ENCODE measurements at regions of chrX and their contacts with region 1.

Region 1: GRCh38 chrX:41084044-41084892 is 977 bp upstream of the USP9X start:
- DNase-seq: peak; percentile 95 to 100 (median 99)
- H3K4me3 ChIP-seq: peak overlapping the region; percentile 81 to 91
- H3K4me3 Mint-ChIP-seq: peak overlapping the region; percentile 88 to 99 (median 97)
- H3K27ac ChIP-seq: peak overlapping the region; percentile 95
- H3K27ac Mint-ChIP-seq: peak overlapping the region; percentile 97 to 100 (median 100)
- H3K4me1 ChIP-seq: peaks cover 19% of the 10 kb centered on the region
- H3K4me1 Mint-ChIP-seq: peaks cover 10 to 37% (median 31%) of the 10 kb centered on the region in 4 donors
- H3K27me3 ChIP-seq: no peaks in the 10 kb centered on the region
- H3K27me3 Mint-ChIP-seq: peaks cover 0 to 1% of the 10 kb centered on the region in 2 donors

Region 2: DNA sequence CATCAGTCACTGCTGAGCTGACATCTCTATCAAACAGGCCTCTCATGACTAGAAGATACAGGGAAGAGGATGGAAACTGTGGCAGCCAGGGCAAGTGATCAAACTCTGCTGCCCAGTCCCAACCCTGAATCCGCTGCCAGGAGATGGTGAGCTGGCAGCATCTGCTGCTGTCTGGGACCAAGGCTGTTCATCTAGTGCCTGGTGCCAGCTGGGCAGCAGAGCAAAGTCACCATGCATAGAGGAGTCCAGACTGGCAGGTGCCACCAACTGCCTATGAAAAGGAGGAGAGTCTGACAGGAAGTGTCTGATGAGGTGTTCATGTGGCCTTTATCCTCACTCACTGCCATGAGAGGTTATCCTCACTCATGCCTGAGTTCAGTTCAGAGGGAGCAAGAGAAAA is 1764.1 kb before region 1 on chrX:
- CTCF ChIA-PET with region 1: no interaction called
- POLR2A ChIA-PET with region 1: no interaction called
- intact Hi-C with region 1: no loop called
- DNase-seq: no peak
- H3K4me3 ChIP-seq: no peak overlapping the region
- H3K4me3 Mint-ChIP-seq: no peak overlapping the region
- H3K27ac ChIP-seq: no peak overlapping the region
- H3K27ac Mint-ChIP-seq: peak overlapping the region in 1 of 7 donors; percentile 13
- H3K4me1 ChIP-seq: peaks cover 24% of the 10 kb centered on the region
- H3K4me1 Mint-ChIP-seq: peaks cover 5 to 27% (median 16%) of the 10 kb centered on the region in 4 donors
- H3K27me3 ChIP-seq: no peaks in the 10 kb centered on the region
- H3K27me3 Mint-ChIP-seq: no peaks in the 10 kb centered on the region

Region 3: GRCh38 chrX:40580537-40581335 is 503.5 kb before region 1 on chrX and contains the start of gene ATP6AP2:
- CTCF ChIA-PET with region 1: no interaction called
- POLR2A ChIA-PET with region 1: no interaction called
- intact Hi-C with region 1: loop called (anchors 5 kb)
- DNase-seq: peak; percentile 85 to 93 (median 90)
- H3K4me3 ChIP-seq: peak within 1 kb of the TSS; percentile 61 to 82
- H3K4me3 Mint-ChIP-seq: peak within 1 kb of the TSS; percentile 90 to 95 (median 92)
- H3K27ac ChIP-seq: peak within 1 kb of the TSS; percentile 84
- H3K27ac Mint-ChIP-seq: peak within 1 kb of the TSS; percentile 85 to 98 (median 96)
- H3K4me1 ChIP-seq: peaks cover 21% of the 10 kb centered on the region
- H3K4me1 Mint-ChIP-seq: peaks cover 15 to 35% (median 26%) of the 10 kb centered on the region in 4 donors
- H3K27me3 ChIP-seq: no peaks in the 10 kb centered on the region
- H3K27me3 Mint-ChIP-seq: no peaks in the 10 kb centered on the region
- total RNA-seq, gene ATP6AP2: 80.9 to 86.5 TPM

Region 4: GRCh38 chrX:40735325-40736169 is 348.7 kb before region 1 on chrX and contains the start of gene MED14:
- CTCF ChIA-PET with region 1: no interaction called
- POLR2A ChIA-PET with region 1: interaction called, 11 read pairs
- intact Hi-C with region 1: no loop called
- DNase-seq: peak; percentile 95 to 96 (median 96)
- H3K4me3 ChIP-seq: peak within 1 kb of the TSS; percentile 52 to 73
- H3K4me3 Mint-ChIP-seq: peak within 1 kb of the TSS; percentile 93 to 98 (median 97)
- H3K27ac ChIP-seq: peak within 1 kb of the TSS; percentile 94
- H3K27ac Mint-ChIP-seq: peak within 1 kb of the TSS; percentile 97 to 100 (median 99)
- H3K4me1 ChIP-seq: peaks cover 28% of the 10 kb centered on the region
- H3K4me1 Mint-ChIP-seq: peaks cover 23 to 76% (median 43%) of the 10 kb centered on the region in 4 donors
- H3K27me3 ChIP-seq: no peaks in the 10 kb centered on the region
- H3K27me3 Mint-ChIP-seq: no peaks in the 10 kb centered on the region
- total RNA-seq, gene MED14: 37.9 to 39.0 TPM

Region 5: GRCh38 chrX:40933132-40933705 is 151.0 kb before region 1 on chrX:
- CTCF ChIA-PET with region 1: no interaction called
- POLR2A ChIA-PET with region 1: interaction called, 15 read pairs
- intact Hi-C with region 1: loop called (anchors 5 kb)
- DNase-seq: peak; percentile 26 to 54 (median 28)
- H3K4me3 ChIP-seq: peak overlapping the region in 1 of 2 donors; percentile 18
- H3K4me3 Mint-ChIP-seq: peak overlapping the region; percentile 81 to 91 (median 88)
- H3K27ac ChIP-seq: peak overlapping the region; percentile 38
- H3K27ac Mint-ChIP-seq: peak overlapping the region; percentile 77 to 96 (median 89)
- H3K4me1 ChIP-seq: peaks cover 16% of the 10 kb centered on the region
- H3K4me1 Mint-ChIP-seq: peaks cover 11 to 24% (median 15%) of the 10 kb centered on the region in 4 donors
- H3K27me3 ChIP-seq: no peaks in the 10 kb centered on the region
- H3K27me3 Mint-ChIP-seq: no peaks in the 10 kb centered on the region

Region 6: DNA sequence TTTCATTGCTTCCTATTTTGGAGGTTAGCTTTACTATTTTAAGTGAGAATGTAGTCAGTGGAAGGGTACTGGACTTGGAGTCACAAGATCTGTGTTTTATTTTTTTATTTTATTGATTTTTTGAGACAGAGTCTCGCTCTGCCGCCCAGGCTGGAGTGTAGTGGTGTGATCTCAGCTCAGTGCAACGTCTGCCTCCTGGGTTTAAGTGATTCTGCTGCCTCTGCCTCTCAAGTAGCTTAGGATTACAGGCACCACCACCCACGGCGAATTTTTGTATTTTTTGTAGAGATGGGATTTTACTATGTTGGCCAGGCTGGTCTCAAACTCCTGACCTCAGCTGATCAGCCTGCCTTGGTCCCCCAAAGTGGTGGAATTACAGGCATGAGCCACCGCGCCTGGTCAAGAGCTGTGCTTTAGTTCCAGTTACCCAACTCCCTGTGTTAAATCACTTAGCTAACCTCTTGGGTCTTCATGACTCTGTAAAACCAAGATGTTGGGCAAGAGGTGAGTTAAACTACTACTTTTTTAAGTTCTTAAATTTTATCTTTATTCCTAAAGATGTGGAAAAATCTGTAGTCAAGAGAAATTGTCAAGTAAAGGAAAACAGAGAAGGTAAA is 12.2 kb after region 1 on chrX:
- CTCF ChIA-PET with region 1: no interaction called
- POLR2A ChIA-PET with region 1: interaction called, 17 read pairs
- intact Hi-C with region 1: no loop called
- DNase-seq: no peak
- H3K4me3 ChIP-seq: no peak overlapping the region
- H3K4me3 Mint-ChIP-seq: peak overlapping the region in 7 of 8 donors; percentile 13 to 69 (median 51)
- H3K27ac ChIP-seq: no peak overlapping the region
- H3K27ac Mint-ChIP-seq: peak overlapping the region in 4 of 7 donors; percentile 13 to 64 (median 40)
- H3K4me1 ChIP-seq: peaks cover 76% of the 10 kb centered on the region
- H3K4me1 Mint-ChIP-seq: peaks cover 49 to 93% (median 73%) of the 10 kb centered on the region in 4 donors
- H3K27me3 ChIP-seq: no peaks in the 10 kb centered on the region
- H3K27me3 Mint-ChIP-seq: no peaks in the 10 kb centered on the region

Region 7: GRCh38 chrX:41110801-41111625 is 26.7 kb after region 1 on chrX:
- CTCF ChIA-PET with region 1: interaction called, 12 read pairs
- POLR2A ChIA-PET with region 1: interaction called, 42 read pairs
- intact Hi-C with region 1: no loop called
- DNase-seq: no peak
- H3K4me3 ChIP-seq: no peak overlapping the region
- H3K4me3 Mint-ChIP-seq: peak overlapping the region in 6 of 8 donors; percentile 26 to 74 (median 50)
- H3K27ac ChIP-seq: peak overlapping the region; percentile 10
- H3K27ac Mint-ChIP-seq: peak overlapping the region in 6 of 7 donors; percentile 1 to 88 (median 48)
- H3K4me1 ChIP-seq: peaks cover 73% of the 10 kb centered on the region
- H3K4me1 Mint-ChIP-seq: peaks cover 51 to 77% (median 65%) of the 10 kb centered on the region in 4 donors
- H3K27me3 ChIP-seq: no peaks in the 10 kb centered on the region
- H3K27me3 Mint-ChIP-seq: no peaks in the 10 kb centered on the region

Region 8: GRCh38 chrX:41133551-41133950 is 49.3 kb after region 1 on chrX:
- CTCF ChIA-PET with region 1: no interaction called
- POLR2A ChIA-PET with region 1: no interaction called
- intact Hi-C with region 1: no loop called
- DNase-seq: no peak
- H3K4me3 ChIP-seq: no peak overlapping the region
- H3K4me3 Mint-ChIP-seq: no peak overlapping the region
- H3K27ac ChIP-seq: no peak overlapping the region
- H3K27ac Mint-ChIP-seq: no peak overlapping the region
- H3K4me1 ChIP-seq: no peaks in the 10 kb centered on the region
- H3K4me1 Mint-ChIP-seq: peaks cover 0 to 8% (median 3%) of the 10 kb centered on the region in 4 donors
- H3K27me3 ChIP-seq: no peaks in the 10 kb centered on the region
- H3K27me3 Mint-ChIP-seq: no peaks in the 10 kb centered on the region

Region 9: DNA sequence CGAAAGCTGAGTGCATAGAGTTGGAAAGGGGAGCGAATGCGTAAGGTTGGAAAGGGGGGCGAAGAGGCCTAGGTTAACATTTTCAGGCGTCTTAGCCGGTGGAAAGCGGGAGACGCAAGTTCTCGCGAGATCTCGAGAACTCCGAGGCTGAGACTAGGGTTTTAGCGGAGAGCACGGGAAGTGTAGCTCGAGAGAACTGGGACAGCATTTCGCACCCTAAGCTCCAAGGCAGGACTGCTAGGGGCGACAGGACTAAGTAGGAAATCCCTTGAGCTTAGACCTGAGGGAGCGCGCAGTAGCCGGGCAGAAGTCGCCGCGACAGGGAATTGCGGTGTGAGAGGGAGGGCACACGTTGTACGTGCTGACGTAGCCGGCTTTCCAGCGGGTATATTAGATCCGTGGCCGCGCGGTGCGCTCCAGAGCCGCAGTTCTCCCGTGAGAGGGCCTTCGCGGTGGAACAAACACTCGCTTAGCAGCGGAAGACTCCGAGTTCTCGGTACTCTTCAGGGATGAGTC is 249.5 kb after region 1 on chrX and contains the start of gene DDX3X:
- CTCF ChIA-PET with region 1: no interaction called
- POLR2A ChIA-PET with region 1: interaction called, 5 read pairs
- intact Hi-C with region 1: loop called (anchors 2 kb)
- DNase-seq: peak; percentile 83 to 95 (median 94)
- H3K4me3 ChIP-seq: peak within 1 kb of the TSS; percentile 84 to 98
- H3K4me3 Mint-ChIP-seq: peak within 1 kb of the TSS; percentile 91 to 99 (median 98)
- H3K27ac ChIP-seq: peak within 1 kb of the TSS; percentile 98
- H3K27ac Mint-ChIP-seq: peak within 1 kb of the TSS; percentile 99 to 100 (median 100)
- H3K4me1 ChIP-seq: peaks cover 27% of the 10 kb centered on the region
- H3K4me1 Mint-ChIP-seq: peaks cover 11 to 65% (median 44%) of the 10 kb centered on the region in 4 donors
- H3K27me3 ChIP-seq: no peaks in the 10 kb centered on the region
- H3K27me3 Mint-ChIP-seq: no peaks in the 10 kb centered on the region
- total RNA-seq, gene DDX3X: 318 to 320 TPM